Right cardiac atrium (tissue), 5 donors: ENCODE measurements at regions of chr11 and their contacts with region 1.

Region 1: DNA sequence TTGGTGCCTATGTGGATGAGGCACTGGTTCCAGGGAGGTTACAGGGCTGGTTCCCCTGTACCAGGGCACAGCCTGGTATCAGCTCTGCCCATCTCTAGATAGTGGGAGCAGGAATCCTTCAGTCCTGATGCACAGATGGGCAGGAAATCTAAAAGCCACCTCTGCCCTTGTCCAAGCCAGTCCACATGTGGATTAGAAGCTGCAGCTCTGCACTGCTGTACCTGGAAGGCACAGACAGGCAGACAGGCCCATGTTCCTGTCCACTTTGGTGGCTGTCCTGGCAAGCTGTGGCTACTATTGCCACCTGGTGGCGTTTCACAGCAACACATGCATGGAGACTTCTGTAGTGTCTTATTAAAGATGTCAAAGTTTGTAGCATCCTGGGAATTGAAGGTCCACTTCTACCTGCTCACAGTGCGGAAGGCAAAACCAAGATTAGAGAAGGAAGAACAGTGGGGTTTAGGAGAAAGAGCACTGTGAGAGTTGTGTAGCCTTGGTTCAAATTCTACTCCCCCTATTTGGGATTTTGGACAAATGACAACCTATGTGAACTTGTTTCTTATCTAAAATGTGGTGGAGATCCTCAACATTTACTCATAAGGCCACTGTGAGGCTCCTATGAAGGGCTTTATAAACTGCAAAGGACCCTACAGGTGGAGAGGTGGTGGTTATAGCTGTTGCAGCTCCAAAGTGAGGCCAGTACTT is 30.1 kb downstream of the NAV2 start:
- DNase-seq: peak; percentile 76 to 90 (median 87)
- ATAC-seq: peak; percentile 85 to 90
- H3K4me3 ChIP-seq: no peak overlapping the region
- H3K27ac ChIP-seq: no peak overlapping the region
- H3K4me1 ChIP-seq: peaks cover 7% of the 10 kb centered on the region
- H3K27me3 ChIP-seq: no peaks in the 10 kb centered on the region

Region 2: DNA sequence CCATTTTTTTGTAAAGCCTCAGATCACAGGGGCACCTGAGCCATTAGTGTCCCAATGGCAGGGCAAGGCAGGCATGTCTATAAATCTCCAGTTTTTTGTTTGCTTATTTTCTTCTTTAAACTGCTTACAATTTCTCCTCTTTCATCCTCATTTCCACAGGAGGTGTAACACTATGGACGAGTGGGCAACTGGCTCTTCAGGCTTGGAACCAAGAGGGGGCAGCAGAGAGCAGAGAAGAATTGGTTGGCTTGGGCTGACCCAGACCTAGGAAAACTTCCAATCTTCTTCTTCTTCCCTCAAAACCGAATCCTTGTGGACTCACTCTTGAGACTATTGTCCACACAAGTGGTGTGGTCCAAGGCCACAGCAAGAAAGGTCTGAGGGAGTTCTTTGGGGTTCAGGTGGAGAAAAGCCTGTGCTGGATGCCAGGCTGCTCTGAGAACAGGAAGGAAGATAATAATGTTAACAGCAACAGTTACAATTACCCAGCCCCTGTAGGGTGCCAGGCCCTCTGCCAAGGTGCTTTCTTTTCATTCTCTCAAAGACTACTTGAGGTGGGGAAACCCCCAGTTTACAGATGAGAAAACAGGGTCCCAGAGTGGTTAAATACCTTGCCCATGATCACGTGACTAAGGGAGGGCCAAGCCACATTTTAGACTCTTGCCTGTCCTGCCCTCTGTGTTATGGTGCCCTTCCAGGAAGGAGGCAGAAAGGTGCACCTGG is 431.3 kb before region 1 on chr11:
- intact Hi-C with region 1: loop called in 1 of 4 experiments (anchors 10 kb)
- DNase-seq: peak; percentile 67 to 85 (median 73)
- ATAC-seq: peak; percentile 85 to 86
- H3K4me3 ChIP-seq: no peak overlapping the region
- H3K27ac ChIP-seq: no peak overlapping the region
- H3K4me1 ChIP-seq: no peaks in the 10 kb centered on the region
- H3K27me3 ChIP-seq: no peaks in the 10 kb centered on the region

Region 3: DNA sequence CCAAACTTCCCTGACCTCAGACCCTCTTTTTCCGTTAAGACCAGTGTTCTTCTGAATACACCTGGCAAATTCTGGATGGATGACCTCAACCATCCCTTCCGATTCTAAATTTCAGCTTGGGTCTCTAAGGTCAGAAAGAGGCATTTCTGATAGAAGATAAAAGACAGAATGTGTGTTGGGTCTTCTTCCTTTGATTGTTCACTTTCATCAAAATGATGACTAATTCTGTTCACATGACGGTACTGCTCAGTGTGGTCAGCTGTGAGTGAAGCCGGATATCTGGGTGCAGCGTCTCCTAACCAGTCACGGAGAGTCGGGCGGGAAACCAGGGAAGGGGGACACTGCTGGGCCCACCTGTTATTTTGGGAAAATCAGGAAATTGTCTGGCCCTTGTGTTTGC is 181.7 kb before region 1 on chr11:
- intact Hi-C with region 1: loop called (anchors 1 to 5 kb)
- DNase-seq: no peak
- ATAC-seq: no peak
- H3K4me3 ChIP-seq: no peak overlapping the region
- H3K27ac ChIP-seq: no peak overlapping the region
- H3K4me1 ChIP-seq: no peaks in the 10 kb centered on the region
- H3K27me3 ChIP-seq: no peaks in the 10 kb centered on the region

Region 4: DNA sequence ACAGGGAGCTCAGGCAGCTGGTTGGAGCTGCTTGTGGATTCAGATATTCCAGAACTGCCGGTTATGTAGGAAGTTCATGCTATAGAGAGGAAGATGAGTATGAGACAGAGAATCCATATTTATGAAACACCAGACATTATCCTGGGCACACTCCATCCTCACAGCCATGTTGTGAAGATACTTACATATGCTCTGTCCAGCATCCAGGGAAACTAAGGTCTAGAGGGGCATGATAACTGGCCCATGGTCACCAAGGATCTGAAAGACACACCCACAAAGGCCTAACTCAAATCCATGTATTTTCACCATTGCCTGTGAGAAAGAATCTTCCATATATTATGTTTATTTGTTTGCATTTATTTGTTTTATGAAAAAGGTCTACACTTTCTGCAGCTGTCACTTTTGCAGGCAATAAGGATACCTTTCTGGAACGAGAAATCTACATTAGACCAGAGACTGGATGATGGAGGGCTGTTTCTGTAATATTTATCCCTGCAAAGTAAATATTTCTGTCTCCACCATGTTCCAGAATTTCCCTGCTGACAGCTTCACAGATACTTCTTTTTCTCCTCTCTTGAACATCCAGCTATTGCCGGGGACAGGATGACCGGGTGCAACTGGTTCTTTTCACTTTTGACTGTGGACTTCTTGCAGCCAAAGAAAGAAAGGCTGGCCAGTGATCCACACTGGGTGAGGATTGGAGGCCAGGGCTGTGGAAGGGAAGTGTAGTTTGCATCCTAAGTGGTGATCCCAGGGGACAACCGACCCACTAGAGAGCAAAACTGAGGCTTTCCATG is 176.0 kb before region 1 on chr11:
- intact Hi-C with region 1: loop called (anchors 1 to 5 kb)
- DNase-seq: no peak
- ATAC-seq: no peak
- H3K4me3 ChIP-seq: no peak overlapping the region
- H3K27ac ChIP-seq: no peak overlapping the region
- H3K4me1 ChIP-seq: no peaks in the 10 kb centered on the region
- H3K27me3 ChIP-seq: no peaks in the 10 kb centered on the region

Region 5: GRCh38 chr11:19679952-19680828 is 62.5 kb before region 1 on chr11:
- intact Hi-C with region 1: loop called in 1 of 4 experiments (anchors 10 kb)
- DNase-seq: peak; percentile 94 to 96 (median 95)
- ATAC-seq: peak; percentile 84 to 90
- H3K4me3 ChIP-seq: no peak overlapping the region
- H3K27ac ChIP-seq: peak overlapping the region; percentile 73
- H3K4me1 ChIP-seq: peaks cover 38% of the 10 kb centered on the region
- H3K27me3 ChIP-seq: no peaks in the 10 kb centered on the region

Region 6: DNA sequence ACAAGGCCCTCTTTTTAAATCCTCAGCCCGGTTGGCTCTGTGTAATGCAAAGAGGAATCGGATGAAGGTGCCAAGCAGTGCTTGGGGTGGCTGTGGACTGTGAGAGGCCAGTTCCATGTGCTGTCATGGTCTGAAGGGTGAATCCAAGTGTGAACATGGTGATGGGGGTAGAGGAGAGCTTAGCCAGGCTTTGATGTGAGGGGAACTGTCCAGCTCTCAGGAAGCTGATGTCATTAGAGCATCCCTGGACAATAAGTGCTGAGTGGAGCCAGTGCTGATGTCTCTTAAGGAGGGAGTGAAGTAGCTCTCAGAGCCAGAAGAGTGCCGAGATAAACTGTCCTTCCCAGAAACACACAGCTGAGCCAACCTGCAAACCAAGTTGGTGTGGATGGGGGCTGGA is 23.5 kb after region 1 on chr11:
- intact Hi-C with region 1: no loop called
- DNase-seq: no peak
- ATAC-seq: peak; percentile 28 to 55
- H3K4me3 ChIP-seq: no peak overlapping the region
- H3K27ac ChIP-seq: no peak overlapping the region
- H3K4me1 ChIP-seq: peaks cover 9% of the 10 kb centered on the region
- H3K27me3 ChIP-seq: no peaks in the 10 kb centered on the region